Thyroid gland (tissue), 4 donors: ENCODE measurements at regions of chr21 and their contacts with region 1.

Region 1: DNA sequence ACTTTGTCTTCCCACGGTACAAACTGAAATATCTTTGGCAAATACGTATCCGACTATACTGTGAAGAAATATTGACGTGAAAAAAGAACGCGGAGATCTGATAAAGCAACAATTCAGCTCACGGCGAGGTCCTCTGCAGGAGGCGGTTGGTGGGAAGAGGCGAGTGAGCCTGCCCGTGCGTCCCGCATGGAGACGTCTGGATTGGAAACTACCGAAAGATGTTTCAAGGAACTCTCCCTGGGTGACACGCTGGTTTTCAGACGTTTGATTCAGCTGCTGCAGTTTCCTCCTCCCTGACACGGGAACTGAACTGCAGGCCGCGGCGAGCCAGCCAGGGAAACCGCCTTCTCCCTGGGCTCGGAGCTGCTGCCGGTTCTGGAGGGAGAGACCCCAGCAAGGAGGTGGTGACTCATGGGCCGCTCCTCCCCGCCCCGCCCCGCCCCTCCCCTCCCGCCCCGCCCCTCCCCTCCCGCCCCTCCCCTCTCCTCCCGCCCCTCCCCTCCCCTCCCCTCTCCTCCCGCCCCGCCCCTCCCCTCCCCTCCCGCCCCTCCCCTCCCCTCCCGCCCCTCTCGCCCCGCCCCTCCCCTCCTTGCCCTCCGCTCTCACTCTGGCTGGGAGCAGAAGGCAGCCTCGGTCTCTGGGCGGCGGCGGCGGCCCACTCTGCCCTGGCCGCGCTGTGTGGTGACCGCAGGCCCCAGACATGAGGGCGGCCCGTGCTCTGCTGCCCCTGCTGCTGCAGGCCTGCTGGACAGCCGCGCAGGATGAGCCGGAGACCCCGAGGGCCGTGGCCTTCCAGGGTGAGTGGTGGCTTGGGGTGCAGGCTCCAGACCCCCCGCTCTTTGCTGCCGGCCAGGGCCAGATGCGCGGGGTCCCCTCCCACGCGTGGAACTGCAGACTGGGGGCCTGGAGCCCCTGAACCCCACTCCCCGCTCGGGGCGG is at the start of gene COL6A1:
- DNase-seq: peak; percentile 76 to 78
- H3K4me3 ChIP-seq: peak within 1 kb of the TSS; percentile 59 to 78 (median 71)
- H3K27ac ChIP-seq: peak within 1 kb of the TSS; percentile 64 to 85 (median 79)
- H3K4me1 ChIP-seq: peaks cover 13 to 26% of the 10 kb centered on the region in 2 donors
- H3K27me3 ChIP-seq: no peaks in the 10 kb centered on the region
- CTCF ChIP-seq: no peak
- POLR2A ChIP-seq: peak; percentile 54 to 73
- total RNA-seq, gene COL6A1: 96.1 to 213 (median 162) TPM

Region 2: DNA sequence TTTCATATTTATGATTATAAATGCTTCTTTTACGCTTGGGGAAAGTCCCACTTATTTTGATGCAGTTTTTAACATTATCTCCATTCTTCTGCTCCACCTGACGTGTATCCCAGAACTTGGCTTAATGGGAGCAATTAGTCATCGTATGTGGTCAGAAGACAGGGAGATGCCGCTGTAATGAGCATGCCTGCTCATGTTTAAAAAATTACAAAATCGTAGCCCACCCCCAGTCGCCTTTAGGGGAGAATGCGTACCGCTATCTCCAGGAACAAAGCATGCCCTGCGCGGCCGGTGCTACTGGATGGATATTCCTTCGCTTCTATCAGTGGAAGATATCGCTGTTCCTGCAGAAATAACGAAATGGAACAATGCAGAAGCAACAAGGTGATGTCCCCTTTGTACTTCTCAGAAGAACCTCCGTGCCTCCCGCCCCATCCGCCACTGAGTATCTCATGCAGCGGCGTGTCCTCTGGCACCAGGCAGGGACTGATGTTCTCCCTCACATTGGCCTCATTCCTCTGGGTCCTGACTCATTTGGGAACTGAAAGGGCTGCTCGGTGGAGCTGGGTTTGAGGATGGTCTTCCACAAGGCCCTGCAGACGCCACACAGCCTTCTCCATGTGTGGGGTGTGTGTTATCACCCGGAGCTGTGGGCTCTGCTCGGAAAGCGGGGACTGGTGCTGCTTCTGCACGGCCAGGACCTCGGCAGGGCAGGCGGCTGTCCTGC is 116.2 kb before region 1 on chr21:
- intact Hi-C with region 1: no loop called
- DNase-seq: no peak
- H3K4me3 ChIP-seq: no peak overlapping the region
- H3K27ac ChIP-seq: no peak overlapping the region
- H3K4me1 ChIP-seq: no peaks in the 10 kb centered on the region
- H3K27me3 ChIP-seq: no peaks in the 10 kb centered on the region
- CTCF ChIP-seq: no peak
- POLR2A ChIP-seq: no peak

Region 3: DNA sequence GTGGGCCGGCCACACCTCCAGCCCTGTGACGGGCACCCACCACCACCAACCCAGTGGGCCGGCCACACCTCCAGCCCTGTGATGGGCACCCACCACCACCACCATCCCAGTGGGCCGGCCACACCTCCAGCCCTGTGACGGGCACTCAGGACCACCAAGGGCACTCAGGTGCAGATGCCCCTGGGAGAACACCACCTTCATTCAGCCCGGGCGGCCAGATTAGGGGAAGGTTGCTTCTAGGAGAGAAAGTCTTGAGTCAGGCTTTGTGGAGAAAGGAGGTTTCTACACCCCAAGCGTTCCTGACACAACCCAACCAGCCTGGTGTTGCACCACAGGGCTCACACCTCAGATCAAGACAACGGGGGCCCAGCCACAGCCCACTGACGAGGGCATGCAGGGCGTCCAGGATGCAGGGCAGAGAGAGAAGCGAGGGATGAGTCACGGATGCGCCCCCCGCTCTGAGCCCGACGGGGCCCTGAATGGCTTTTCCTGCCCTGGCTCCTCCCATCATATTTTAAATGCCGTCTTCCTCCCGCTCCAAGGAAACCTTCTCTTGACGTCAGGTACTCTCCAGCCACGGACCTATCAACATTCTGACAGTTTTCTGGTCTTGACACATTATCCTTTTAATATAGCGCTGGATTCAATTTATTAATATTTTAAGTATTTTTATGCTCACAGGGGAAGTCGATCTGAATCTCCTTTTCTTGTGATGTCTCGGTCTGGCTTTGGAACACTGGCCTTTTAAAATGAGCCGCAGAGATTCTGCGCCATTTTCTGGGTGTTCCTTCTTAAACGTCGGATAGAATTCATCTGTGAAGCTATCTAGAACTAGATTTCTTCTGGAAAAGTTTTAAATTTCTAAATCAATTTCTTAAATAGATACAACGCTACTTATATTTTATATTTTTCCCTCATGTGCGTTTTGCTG is 203.5 kb after region 1 on chr21:
- intact Hi-C with region 1: loop called (anchors 10 kb)
- DNase-seq: peak; percentile 85 to 88
- H3K4me3 ChIP-seq: peak overlapping the region in 2 of 3 donors; percentile 8 to 19
- H3K27ac ChIP-seq: peak overlapping the region; percentile 29 to 73 (median 44)
- H3K4me1 ChIP-seq: peaks cover 0 to 12% of the 10 kb centered on the region in 2 donors
- H3K27me3 ChIP-seq: no peaks in the 10 kb centered on the region
- CTCF ChIP-seq: no peak
- POLR2A ChIP-seq: peak in 1 of 2 donors; percentile 29